ENCODE measurements at regions of chr2 and their contacts with region 1.

Region 1: DNA sequence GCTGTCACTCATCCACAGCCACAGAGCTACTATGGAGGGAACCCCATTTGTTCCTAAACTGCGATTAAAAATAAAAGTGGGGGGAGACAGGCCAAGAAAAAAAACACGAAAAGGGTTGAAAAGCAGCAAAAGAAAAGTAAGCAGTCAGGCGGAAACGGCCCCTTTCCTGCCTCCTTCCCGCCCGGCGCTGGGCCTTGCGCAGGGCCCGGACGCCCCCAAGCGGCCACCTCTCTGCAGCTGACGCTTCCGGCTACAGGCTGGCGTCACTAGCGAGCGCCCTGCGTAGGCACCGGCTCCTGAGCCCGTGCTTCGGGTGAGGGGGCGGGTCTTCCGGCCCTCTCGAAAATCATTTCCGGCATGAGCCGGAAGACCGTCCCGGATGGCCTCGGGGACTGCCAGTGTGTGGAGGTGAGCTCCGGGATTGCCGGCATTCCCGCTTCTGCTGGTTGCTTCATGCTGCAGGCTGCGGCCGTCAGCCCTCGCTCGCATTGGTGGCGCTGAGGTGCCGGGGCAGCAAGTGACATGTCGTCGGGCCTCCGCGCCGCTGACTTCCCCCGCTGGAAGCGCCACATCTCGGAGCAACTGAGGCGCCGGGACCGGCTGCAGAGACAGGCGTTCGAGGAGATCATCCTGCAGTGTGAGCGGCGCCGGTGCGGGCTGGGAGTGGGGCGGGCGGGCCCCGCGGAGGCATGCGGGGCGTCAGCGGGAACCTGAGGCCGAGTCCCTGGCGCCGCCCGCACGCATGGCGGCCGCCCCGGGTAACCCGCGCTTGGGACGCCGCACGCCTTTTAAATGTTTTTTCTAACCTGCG is at the start of gene ATG16L1:
- DNase-seq: peak; percentile 98
- H3K4me3 ChIP-seq: peak within 1 kb of the TSS; percentile 96
- H3K27ac ChIP-seq: peak within 1 kb of the TSS; percentile 71
- H3K4me1 ChIP-seq: peaks cover 43% of the 10 kb centered on the region
- CTCF ChIP-seq: peak; percentile 94
- total RNA-seq, gene ATG16L1: 42.5 and 44.9 TPM in 2 replicates

Region 2: GRCh38 chr2:232761301-232761907 is 490.1 kb before region 1 on chr2:
- CTCF ChIA-PET with region 1: no interaction called
- POLR2A ChIA-PET with region 1: no interaction called
- intact Hi-C with region 1: loop called (anchors 2 kb)
- DNase-seq: peak; percentile 70
- H3K4me3 ChIP-seq: no peak overlapping the region
- H3K27ac ChIP-seq: no peak overlapping the region
- H3K4me1 ChIP-seq: no peaks in the 10 kb centered on the region
- CTCF ChIP-seq: peak; percentile 95

Region 3: DNA sequence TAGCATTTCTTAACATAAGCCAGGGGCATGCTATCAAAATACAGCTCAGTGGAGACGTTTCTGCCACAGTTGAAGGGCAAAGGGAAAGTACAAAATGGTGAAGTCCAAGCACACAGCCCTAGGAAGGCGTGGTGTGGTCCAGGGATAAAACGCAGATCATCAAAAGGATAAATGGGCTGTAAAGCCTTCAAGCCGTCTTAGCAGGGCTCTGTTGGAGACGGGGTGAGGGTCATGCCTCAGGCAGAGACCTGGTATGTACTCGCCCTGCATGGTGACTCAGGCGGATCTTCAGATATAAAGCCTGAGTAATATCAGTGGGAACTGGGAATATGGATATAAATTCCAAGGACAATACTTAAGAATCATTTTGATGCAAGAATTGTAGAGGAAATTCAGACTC is 299.6 kb before region 1 on chr2:
- CTCF ChIA-PET with region 1: no interaction called
- POLR2A ChIA-PET with region 1: no interaction called
- intact Hi-C with region 1: no loop called
- DNase-seq: no peak
- H3K4me3 ChIP-seq: no peak overlapping the region
- H3K27ac ChIP-seq: no peak overlapping the region
- H3K4me1 ChIP-seq: peaks cover 29% of the 10 kb centered on the region
- CTCF ChIP-seq: no peak

Region 4: GRCh38 chr2:232982926-232983668 is 268.4 kb before region 1 on chr2:
- CTCF ChIA-PET with region 1: no interaction called
- POLR2A ChIA-PET with region 1: no interaction called
- intact Hi-C with region 1: loop called (anchors 1 kb)
- DNase-seq: peak; percentile 33
- H3K4me3 ChIP-seq: no peak overlapping the region
- H3K27ac ChIP-seq: no peak overlapping the region
- H3K4me1 ChIP-seq: no peaks in the 10 kb centered on the region
- CTCF ChIP-seq: peak; percentile 70

Region 5: DNA sequence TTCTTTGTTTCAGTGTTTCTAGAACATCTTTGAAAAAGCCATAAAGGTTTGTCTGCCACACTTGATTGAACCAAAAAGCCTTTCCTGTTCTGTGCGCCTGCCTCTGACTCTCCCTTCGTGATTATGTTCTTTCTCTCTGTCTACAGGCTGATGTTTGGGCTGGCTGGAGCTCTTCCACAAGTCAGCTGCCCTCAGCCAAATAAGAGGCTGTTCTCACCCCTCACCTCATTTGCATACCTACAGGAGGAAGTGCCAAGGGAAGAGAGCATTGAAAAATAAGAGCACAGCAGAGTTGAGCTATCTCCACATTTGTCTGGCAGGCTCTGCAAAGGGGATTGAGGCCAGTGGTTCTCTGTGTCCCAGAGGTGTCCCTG is 175.6 kb before region 1 on chr2:
- CTCF ChIA-PET with region 1: no interaction called
- POLR2A ChIA-PET with region 1: interaction called, 3 read pairs
- intact Hi-C with region 1: loop called (anchors 2 kb)
- DNase-seq: peak; percentile 93
- H3K4me3 ChIP-seq: peak overlapping the region; percentile 56
- H3K27ac ChIP-seq: peak overlapping the region; percentile 93
- H3K4me1 ChIP-seq: peaks cover 90% of the 10 kb centered on the region
- CTCF ChIP-seq: no peak

Region 6: DNA sequence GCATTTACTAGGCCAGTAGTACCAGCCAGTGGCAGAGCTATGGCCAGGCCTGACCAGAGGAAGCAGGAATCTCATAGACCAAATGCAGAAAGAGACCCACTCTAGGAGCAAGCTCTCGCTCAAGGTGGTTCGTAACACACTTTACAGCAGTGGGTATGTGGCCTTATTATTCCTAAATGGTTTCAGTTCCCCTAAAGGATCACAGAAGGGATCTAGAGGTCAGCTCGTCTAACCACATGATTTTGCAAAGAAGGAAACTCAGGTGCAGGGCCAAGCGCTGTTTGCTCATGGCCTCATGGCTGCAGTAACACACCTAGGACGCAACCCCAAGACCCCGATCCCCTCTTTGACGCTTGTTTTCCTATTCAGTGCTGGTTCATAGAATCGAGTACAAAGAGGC is 65.5 kb before region 1 on chr2:
- CTCF ChIA-PET with region 1: no interaction called
- POLR2A ChIA-PET with region 1: no interaction called
- intact Hi-C with region 1: loop called (anchors 2 kb)
- DNase-seq: peak; percentile 78
- H3K4me3 ChIP-seq: peak overlapping the region; percentile 37
- H3K27ac ChIP-seq: peak overlapping the region; percentile 78
- H3K4me1 ChIP-seq: peaks cover 25% of the 10 kb centered on the region
- CTCF ChIP-seq: no peak

Region 7: DNA sequence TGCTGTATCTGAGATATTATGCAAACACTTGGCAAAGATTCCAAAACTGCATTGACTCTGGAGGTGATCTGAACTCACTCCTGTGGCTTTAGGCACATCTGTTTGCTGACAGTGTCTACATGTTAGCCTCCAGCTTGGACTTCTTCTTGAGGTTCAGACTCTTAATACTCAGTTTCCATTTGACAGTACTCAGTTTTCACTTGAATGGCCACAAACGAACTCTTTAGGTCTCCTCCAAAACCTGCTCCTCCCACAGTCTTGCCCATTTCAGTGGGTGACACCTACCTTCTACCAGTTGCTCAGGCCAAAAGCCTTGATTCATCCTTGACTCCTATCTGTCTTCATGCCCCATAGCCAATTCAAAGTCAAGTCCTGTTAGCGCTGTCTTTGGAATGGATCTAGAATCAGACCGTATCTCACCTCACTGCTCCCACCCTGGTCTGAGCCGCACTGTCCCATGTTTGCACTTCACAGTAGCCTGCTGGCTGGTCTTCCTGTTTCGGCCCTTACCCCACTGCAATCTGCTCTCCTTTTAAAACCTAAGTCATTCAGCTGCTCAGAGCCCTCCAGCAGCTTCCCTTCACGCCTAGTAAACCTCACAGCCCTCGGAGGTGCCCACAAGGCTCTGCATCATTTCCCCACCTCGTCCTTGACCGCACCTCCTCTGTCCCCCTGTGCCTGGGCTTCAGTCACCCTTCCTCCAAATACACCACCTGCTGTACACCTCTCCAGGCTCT is 10.5 kb after region 1 on chr2:
- CTCF ChIA-PET with region 1: no interaction called
- POLR2A ChIA-PET with region 1: no interaction called
- intact Hi-C with region 1: no loop called
- DNase-seq: no peak
- H3K4me3 ChIP-seq: no peak overlapping the region
- H3K27ac ChIP-seq: no peak overlapping the region
- H3K4me1 ChIP-seq: peaks cover under 1% of the 10 kb centered on the region
- CTCF ChIP-seq: no peak